PC-3 (cell line): ENCODE measurements at regions of chr1 and their contacts with region 1.

Region 1: DNA sequence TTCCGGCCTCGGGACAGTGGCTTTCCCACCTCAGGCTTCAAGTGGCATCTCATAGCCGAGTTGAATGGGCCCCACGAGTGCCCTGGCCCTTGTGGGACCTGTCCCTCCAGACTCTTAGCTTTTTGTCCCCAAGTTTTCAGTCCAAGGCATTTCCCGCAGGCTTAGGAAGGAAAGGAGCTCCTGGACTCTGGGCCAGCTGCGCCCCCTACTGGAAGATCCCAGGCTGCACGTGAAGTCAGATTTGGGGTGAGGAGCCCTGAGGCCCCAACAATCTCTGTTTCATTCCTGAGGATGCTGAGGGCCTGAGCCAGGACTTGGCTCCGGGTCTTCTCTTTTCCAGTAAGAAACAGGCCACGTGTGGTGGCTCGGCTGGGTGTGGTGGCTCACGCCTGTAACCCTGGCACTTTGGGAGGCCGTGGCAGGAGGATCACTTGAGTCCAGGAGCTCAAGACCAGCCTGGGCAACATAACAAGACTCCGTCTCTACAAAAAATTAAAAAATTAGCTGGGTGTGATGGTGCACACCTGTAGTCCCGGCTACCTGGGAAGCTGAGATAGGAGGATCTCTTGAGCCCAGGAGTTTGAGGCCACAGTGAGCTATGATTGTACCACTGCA is 67.4 kb downstream of the ARHGEF10L start:
- DNase-seq: peak; percentile 79
- ATAC-seq: peak; percentile 83
- H3K4me3 ChIP-seq: no peak overlapping the region
- H3K27ac ChIP-seq: no peak overlapping the region
- H3K4me1 ChIP-seq: no peaks in the 10 kb centered on the region
- H3K27me3 ChIP-seq: no peaks in the 10 kb centered on the region
- CTCF ChIP-seq: peak; percentile 95

Region 2: DNA sequence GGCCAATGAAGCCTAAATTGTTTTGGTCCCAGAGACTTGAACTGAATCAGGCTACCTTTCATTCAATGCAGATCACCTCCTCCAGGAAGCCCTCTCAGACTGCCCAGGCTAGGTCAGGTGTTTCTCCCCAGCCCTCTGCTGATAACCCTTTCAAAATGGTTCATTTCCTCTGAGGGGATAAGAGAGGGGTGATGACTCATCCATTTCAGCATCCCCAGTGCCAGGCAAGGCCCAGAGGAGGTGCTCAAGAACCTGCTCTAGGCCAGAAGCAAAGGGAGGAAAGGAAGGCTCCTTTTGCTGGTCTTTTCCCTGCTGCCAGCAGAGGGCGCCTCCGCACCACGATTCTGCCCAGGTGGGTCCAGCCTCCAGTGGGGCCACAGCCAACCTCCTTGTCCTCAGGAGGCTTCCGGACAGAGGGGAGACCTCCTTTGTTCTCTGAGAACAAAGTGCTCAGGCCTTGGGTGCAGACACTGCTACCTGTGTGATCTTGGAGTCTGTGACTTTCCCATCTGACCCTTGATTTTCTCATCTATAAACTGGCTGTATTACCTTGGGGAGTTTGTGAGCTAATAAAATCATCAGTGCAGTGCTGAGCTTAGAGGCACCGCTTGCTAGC is 112.7 kb before region 1 on chr1:
- CTCF ChIA-PET with region 1: interaction called, 15 read pairs
- POLR2A ChIA-PET with region 1: no interaction called
- intact Hi-C with region 1: loop called (anchors 1 kb)
- DNase-seq: peak; percentile 85
- ATAC-seq: peak; percentile 98
- H3K4me3 ChIP-seq: no peak overlapping the region
- H3K27ac ChIP-seq: no peak overlapping the region
- H3K4me1 ChIP-seq: peaks cover 5% of the 10 kb centered on the region
- H3K27me3 ChIP-seq: no peaks in the 10 kb centered on the region
- CTCF ChIP-seq: peak; percentile 97

Region 3: GRCh38 chr1:17502326-17502778 is 104.6 kb before region 1 on chr1:
- CTCF ChIA-PET with region 1: interaction called, 18 read pairs
- POLR2A ChIA-PET with region 1: no interaction called
- intact Hi-C with region 1: loop called (anchors 1 kb)
- DNase-seq: peak; percentile 83
- ATAC-seq: peak; percentile 95
- H3K4me3 ChIP-seq: no peak overlapping the region
- H3K27ac ChIP-seq: no peak overlapping the region
- H3K4me1 ChIP-seq: no peaks in the 10 kb centered on the region
- H3K27me3 ChIP-seq: no peaks in the 10 kb centered on the region
- CTCF ChIP-seq: peak; percentile 93

Region 4: DNA sequence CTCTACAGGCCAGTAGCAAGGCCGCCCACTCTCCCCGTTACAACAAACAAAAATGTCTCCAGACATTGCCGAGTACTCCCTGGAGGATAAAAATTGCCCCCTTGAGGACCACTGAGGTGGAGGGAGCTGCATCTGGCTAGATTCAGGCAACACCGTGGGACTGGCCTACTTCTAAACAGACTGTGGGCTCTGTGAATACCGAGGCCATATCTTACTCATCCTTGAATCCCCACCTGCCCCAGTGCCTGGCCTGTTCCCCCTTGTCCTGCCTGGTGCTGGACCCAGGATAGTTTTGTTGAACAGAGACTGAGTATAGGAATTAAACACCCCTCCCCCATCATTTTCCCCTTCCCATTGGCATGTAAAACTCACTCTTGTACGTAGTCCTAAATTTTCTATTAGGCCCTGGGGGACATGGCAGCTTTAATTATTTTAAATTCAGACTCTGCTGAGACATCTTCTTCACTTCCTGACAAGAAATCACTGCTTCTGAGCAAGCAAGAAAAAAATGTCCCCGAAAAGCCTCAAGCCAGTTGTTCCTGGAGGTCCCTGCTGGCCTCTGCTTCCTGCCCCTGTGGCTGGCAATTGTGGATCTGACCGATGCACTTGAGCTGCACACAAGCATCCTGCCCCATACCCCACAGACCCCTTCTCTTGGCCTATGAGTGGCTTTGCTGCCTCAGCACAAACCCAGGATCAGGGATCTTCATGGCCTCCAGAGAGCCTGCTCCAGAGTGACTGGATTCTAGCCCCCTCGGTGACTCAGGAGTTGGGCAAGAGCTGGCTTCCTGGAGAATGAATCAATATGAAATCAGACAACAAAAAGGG is 259.2 kb after region 1 on chr1:
- CTCF ChIA-PET with region 1: no interaction called
- POLR2A ChIA-PET with region 1: no interaction called
- intact Hi-C with region 1: no loop called
- DNase-seq: peak; percentile 87
- ATAC-seq: peak; percentile 78
- H3K4me3 ChIP-seq: peak overlapping the region; percentile 29; the same call in 1 of the 2 replicates
- H3K27ac ChIP-seq: peak overlapping the region; percentile 77
- H3K4me1 ChIP-seq: peaks cover 17% of the 10 kb centered on the region
- H3K27me3 ChIP-seq: no peaks in the 10 kb centered on the region
- CTCF ChIP-seq: no peak